ENCODE measurements at regions of chr11 and their contacts with region 1.

Region 1: DNA sequence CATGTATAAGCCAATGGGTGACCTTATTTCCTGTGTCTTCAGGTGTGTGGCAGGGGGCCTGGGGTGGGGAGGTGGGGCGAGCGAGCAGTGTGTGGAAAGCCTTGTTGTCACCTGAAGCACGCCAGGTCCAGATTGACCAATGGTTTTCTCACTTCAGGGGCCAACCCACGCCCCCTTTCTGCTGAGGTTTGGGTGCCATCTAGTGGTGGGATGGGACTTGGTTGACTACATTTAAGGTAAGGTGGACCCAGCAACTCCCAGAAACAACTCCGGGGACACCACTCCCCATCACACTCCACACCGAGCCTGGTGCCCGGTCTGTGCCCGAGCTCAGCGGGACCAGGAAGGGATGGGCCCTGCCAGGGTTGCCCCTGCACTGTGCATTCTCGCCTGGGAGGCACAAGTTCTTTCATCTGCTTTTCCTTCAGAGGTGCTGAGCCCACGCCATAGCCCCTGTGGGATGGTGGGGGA is 40.0 kb downstream of the TPCN2 start:
- DNase-seq: peak; percentile 28 to 89 (median 71)

Region 2: GRCh38 chr11:68927280-68928135 is 161.2 kb before region 1 on chr11:
- intact Hi-C with region 1: loop called (anchors 10 kb)
- DNase-seq: peak in 5 of 42 donors; percentile 19 to 56 (median 34)